ENCODE measurements at regions of chr17 and their contacts with region 1.

Region 1: DNA sequence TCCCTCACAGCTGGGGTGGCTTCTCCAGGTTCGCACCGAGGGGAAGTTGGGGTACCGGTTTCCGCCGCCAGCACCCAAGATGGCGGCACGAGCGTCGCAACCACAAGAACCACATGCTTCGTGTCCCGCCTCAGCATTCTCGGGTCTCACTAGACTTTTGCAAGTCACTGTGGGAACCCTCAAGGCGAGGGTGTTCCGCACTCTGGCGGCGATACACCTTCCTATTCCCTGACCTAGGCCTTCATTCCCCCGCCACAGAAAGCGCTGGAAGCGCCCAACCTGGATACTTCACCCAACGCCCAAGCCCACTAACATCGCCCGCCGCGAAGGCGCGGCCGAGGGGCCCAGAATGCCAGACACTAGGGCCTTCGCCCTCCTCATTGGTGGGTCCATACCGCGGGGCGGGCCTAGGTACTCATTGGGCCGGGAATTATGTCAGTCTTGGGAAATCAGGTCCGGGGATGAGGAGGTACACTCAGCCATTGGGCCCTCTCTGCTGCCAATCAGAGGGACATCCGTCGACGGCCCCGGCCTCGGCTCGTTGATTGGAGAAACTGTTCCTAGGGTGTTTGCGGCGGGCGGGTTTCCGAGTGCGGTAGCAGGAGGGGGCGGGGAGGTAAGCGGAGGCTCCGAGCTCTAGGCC is at the start of gene NFE2L1:
- DNase-seq: peak; percentile 99 to 100
- H3K4me3 ChIP-seq: peak within 1 kb of the TSS; percentile 63 to 88
- H3K27ac ChIP-seq: peak within 1 kb of the TSS; percentile 90 to 95
- H3K4me1 ChIP-seq: peaks cover 26 to 40% of the 10 kb centered on the region in 2 donors
- H3K27me3 ChIP-seq: no peaks in the 10 kb centered on the region
- CTCF ChIP-seq: no peak
- total RNA-seq, gene NFE2L1: 114 TPM

Region 2: GRCh38 chr17:48064638-48065037 is 16.8 kb after region 1 on chr17:
- intact Hi-C with region 1: loop called (anchors 1 kb)
- DNase-seq: no peak
- H3K4me3 ChIP-seq: no peak overlapping the region
- H3K27ac ChIP-seq: peak overlapping the region; percentile 57 to 60
- H3K4me1 ChIP-seq: peaks cover 0 to 19% of the 10 kb centered on the region in 2 donors
- H3K27me3 ChIP-seq: no peaks in the 10 kb centered on the region
- CTCF ChIP-seq: no peak

Region 3: DNA sequence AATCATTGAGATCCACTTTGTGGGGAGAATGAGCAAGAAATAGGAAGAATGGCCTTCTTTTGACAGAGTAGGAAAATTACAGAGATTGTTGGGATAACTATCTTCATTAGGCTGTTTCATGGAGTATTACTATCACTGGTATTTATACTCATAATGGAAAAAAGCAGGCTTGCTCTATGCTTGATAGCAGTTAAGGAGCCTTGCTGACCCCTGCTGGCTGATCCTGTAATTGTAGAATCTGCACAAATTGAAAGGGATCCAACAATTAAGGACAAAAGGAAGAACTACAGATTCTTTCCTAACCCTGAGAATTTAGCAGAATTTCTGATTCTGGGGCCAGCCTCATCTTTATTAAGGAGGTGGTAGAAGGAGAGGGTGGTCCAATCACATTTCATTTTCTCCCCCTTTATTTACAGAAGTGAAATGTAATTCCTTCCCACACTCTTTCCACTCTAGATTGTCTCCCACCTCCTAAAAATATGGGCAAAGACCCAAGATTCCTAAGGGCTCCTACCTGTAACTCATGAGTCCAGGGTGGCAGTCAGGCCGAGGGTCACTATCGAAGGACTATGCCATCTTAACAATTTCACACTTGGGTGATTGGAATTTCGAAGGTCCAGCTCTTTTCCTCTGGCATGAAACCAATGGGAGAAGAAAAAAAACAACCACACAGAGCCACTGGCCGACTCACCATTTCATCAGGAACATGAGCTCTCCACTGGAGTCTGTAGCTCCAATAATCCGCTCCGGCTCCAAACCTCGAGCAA is 26.6 kb after region 1 on chr17:
- intact Hi-C with region 1: loop called (anchors 1 kb)
- DNase-seq: peak in 1 of 2 donors; percentile 92
- H3K4me3 ChIP-seq: no peak overlapping the region
- H3K27ac ChIP-seq: peak overlapping the region in 1 of 2 donors; percentile 34
- H3K4me1 ChIP-seq: no peaks in the 10 kb centered on the region
- H3K27me3 ChIP-seq: no peaks in the 10 kb centered on the region
- CTCF ChIP-seq: peak; percentile 67 to 83 (median 82)

Region 4: GRCh38 chr17:48101012-48101720 is 53.3 kb after region 1 on chr17 and contains the start of gene CBX1:
- intact Hi-C with region 1: loop called (anchors 2 kb)
- DNase-seq: peak; percentile 71 to 97
- H3K4me3 ChIP-seq: peak within 1 kb of the TSS; percentile 88 to 94
- H3K27ac ChIP-seq: peak within 1 kb of the TSS; percentile 96 to 98
- H3K4me1 ChIP-seq: peaks cover 0 to 14% of the 10 kb centered on the region in 2 donors
- H3K27me3 ChIP-seq: no peaks in the 10 kb centered on the region
- CTCF ChIP-seq: no peak
- total RNA-seq, gene CBX1: 20.2 TPM